Activated B cell treated with CpG ODN at 0.5 μM for 24 hours (primary cell): ENCODE measurements at regions of chr1 and their contacts with region 1.

Region 1: GRCh38 chr1:159924981-159925712 is at the start of gene TAGLN2:
- DNase-seq: peak; percentile 94
- ATAC-seq: peak; percentile 69
- H3K4me3 Mint-ChIP-seq: peak within 1 kb of the TSS; percentile 99
- H3K27ac Mint-ChIP-seq: peak within 1 kb of the TSS; percentile 99
- H3K4me1 Mint-ChIP-seq: peaks cover 56% of the 10 kb centered on the region
- H3K27me3 Mint-ChIP-seq: no peaks in the 10 kb centered on the region
- CTCF ChIP-seq: no peak
- total RNA-seq, gene TAGLN2: 327 and 364 TPM in 2 replicates

Region 2: DNA sequence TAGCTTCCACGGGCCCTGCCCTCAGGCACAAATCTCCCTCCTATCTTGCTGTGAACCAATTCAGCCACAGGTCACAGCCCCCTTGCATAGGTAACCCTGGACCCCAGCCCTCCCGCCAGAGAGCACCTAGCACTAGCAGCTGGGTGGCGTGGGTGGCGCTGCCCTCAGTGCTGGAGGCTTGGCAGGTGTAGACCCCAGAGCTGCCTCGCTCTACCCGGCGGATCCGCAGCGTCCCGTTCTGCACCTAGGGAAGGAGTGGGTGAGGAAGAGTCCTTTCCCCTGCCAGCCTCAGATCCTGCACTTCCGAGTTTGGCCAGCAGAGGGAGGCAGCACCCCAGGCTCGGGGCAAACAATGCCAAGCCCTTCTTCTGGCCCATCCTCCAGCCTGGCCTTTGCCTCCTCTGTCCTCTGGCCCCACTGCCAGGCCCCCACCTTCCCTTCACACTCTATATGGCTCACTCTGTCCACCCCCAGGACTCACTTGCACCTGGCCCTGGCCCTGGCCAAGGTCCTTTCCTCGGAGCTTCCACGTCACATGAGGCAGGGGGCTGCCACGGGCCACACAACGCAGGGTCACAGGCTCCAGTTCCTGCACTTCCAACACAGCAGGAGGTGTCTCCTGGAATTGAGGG is 11.2 kb after region 1 on chr1:
- CTCF ChIA-PET with region 1: interaction called, 3 read pairs
- POLR2A ChIA-PET with region 1: interaction called, 16 read pairs
- intact Hi-C with region 1: loop called (anchors 2 kb)
- DNase-seq: peak; percentile 86
- ATAC-seq: peak; percentile 89
- H3K4me3 Mint-ChIP-seq: peak overlapping the region; percentile 25
- H3K27ac Mint-ChIP-seq: no peak overlapping the region
- H3K4me1 Mint-ChIP-seq: peaks cover 47% of the 10 kb centered on the region
- H3K27me3 Mint-ChIP-seq: peaks cover 4% of the 10 kb centered on the region
- CTCF ChIP-seq: peak; percentile 91

Region 3: DNA sequence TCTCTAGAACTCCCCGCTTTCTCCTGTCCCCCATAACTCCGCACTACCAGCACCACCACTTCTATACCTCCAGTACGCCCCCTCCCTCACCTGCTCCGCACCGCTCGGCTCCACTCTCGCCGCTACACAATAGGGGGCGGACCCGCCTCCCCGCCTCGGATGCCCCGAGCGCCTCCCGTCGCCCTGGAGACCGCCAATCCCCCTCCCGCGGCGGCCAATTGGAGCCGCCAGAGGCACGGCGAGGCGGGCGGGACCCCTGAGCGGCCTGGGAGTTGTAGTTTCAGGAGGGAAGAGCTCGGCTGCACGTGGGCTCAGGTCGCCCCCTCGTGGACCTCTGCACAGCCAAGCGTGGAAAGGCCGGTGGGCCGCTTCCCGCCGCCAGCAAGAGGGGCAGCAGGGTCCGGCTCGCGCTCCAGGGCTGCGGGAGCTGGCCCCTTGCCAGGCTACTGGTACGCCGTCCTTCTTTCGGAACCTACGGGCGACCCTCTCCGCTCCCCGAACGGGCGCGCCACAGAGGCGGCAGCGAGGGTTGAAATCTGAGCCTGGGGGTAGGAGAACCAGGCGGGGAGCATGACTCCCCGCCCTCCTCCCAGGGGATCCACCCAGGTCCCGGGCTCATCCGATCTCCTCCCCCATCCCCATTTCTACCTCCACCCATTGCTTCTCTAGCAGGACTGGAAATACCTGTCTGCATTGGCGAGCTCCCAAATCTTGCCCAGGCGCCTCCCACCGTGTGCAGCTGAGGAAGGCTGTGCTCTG is 20.5 kb after region 1 on chr1 and contains the start of gene IGSF9:
- CTCF ChIA-PET with region 1: no interaction called
- POLR2A ChIA-PET with region 1: interaction called, 12 read pairs
- intact Hi-C with region 1: no loop called
- DNase-seq: peak; percentile 58
- ATAC-seq: peak; percentile 95
- H3K4me3 Mint-ChIP-seq: peak within 1 kb of the TSS; percentile 65
- H3K27ac Mint-ChIP-seq: no peak within 1 kb of the TSS
- H3K4me1 Mint-ChIP-seq: peaks cover 11% of the 10 kb centered on the region
- H3K27me3 Mint-ChIP-seq: peaks cover 42% of the 10 kb centered on the region
- CTCF ChIP-seq: no peak
- total RNA-seq, gene IGSF9: not detected in 2 replicates